HepG2 (cell line): ENCODE measurements at regions of chr9 and their contacts with region 1.

Region 1: GRCh38 chr9:111896353-111896958 is at the start of gene UGCG:
- DNase-seq: peak; percentile 74
- ATAC-seq: peak; percentile 93
- H3K4me3 ChIP-seq: peak within 1 kb of the TSS; percentile 70 to 91 (median 72)
- H3K27ac ChIP-seq: peak within 1 kb of the TSS; percentile 72
- H3K4me1 ChIP-seq: peaks cover 56% of the 10 kb centered on the region
- H3K27me3 ChIP-seq: no peaks in the 10 kb centered on the region
- CTCF ChIP-seq: no peak
- EP300 ChIP-seq: 0 out of 4 replicates have a peak, but pooled peaks of 1 of the 2 experiments have one; percentile 11
- POLR2A ChIP-seq: peak; percentile 91 to 97
- RAD21 ChIP-seq: peak; percentile 49; the same call in 1 of the 2 replicates
- total RNA-seq, gene UGCG: 9.7 and 13.9 TPM in 2 replicates

Region 2: DNA sequence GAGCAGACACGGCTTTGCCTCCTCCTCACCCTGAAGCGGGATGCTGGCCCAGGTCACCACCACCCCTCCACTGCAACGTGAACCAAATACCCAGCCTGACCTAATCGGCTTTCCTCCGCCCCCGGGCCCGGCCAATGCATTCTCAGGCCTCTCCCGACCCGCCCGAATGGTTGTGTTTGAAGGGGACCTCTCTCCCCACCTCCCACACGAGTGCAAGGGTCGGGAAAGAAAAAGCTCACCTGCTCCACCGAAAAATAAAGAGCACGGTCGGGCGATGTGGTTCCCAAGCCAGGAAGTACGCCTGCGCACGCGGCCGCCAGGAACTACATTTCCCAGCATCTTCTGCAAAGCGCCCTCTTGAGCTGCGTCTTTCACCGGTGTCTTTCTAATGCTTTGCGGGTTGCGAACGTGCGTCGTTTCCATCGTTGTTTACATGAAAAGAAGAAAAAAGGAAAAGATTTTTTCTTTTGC is 1115.5 kb after region 1 on chr9 and contains the start of gene ZNF883:
- CTCF ChIA-PET with region 1: no interaction called
- POLR2A ChIA-PET with region 1: no interaction called
- in situ Hi-C with region 1: no loop called
- intact Hi-C with region 1: loop called (anchors 5 kb)
- DNase-seq: peak; percentile 68
- ATAC-seq: peak; percentile 99
- H3K4me3 ChIP-seq: peak within 1 kb of the TSS; percentile 65 to 73 (median 69)
- H3K27ac ChIP-seq: no peak within 1 kb of the TSS
- H3K4me1 ChIP-seq: peaks cover 9% of the 10 kb centered on the region; the same call in 1 of the 2 replicates
- H3K27me3 ChIP-seq: no peaks in the 10 kb centered on the region
- CTCF ChIP-seq: peak; percentile 56
- EP300 ChIP-seq: no peak
- POLR2A ChIP-seq: no peak
- RAD21 ChIP-seq: no peak
- total RNA-seq, gene ZNF883: 10.0 and 14.2 TPM in 2 replicates